Naive thymus-derived CD4-positive, alpha-beta T cell (primary cell): ENCODE measurements at regions of chr2 and their contacts with region 1.

Region 1: GRCh38 chr2:240566203-240567136 is 1.8 kb upstream of the RNPEPL1 start:
- DNase-seq: peak; percentile 86 to 96 (median 92)
- ATAC-seq: peak; percentile 79
- H3K4me3 ChIP-seq: peak overlapping the region; percentile 82
- H3K4me3 Mint-ChIP-seq: peak overlapping the region; percentile 88 to 98 (median 94)
- H3K27ac ChIP-seq: peak overlapping the region; percentile 85
- H3K27ac Mint-ChIP-seq: peak overlapping the region; percentile 90 to 99 (median 98)
- H3K4me1 ChIP-seq: peaks cover 80% of the 10 kb centered on the region in 2 donors
- H3K4me1 Mint-ChIP-seq: peaks cover 53 to 82% (median 75%) of the 10 kb centered on the region in 7 donors
- H3K27me3 ChIP-seq: no peaks in the 10 kb centered on the region
- H3K27me3 Mint-ChIP-seq: no peaks in the 10 kb centered on the region

Region 2: DNA sequence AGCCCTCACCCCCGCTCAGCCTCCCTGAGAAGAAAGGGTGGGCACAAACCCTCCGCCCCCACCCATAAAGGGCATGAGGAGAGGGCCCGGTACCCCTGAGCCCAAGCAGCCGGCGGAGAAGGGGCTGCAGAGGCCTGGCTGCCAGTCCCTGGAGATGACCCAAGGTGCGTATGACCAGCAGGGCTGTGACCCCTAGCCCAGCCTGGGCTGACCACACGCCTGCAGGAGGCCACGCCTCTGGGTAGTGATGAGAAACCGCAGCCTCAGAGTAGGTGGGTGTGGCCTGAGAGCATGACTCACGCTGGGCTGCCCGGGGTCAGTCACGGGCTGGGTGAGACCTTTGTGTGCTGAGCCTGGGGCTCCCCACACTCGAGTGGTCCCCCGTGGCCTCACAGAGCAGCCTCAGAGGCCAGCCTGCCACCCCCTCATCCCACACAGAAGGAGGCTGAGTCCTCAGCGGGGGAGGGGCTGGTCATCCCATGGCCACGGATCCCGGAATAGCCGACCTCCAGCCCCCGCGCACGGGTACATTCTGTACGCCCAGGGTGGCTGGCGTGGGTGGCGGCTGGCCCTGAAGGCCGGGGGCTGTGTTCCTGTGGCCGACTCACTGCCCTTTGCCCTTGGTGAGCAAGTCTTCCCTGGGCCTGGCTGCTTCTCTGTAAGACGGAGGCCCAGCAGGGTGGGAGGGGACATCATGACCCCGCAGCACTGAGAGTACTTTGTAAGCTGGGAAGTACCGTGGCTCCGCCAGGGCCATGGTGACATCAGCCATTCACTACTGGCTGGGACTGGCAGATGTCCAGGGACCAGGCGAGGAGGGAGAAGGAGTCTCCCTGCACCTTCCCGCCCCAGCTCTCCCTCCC is 315.3 kb before region 1 on chr2:
- CTCF ChIA-PET with region 1: no interaction called
- POLR2A ChIA-PET with region 1: no interaction called
- intact Hi-C with region 1: no loop called
- DNase-seq: peak in 2 of 9 donors; percentile 5 to 15
- ATAC-seq: peak; percentile 48
- H3K4me3 ChIP-seq: no peak overlapping the region
- H3K4me3 Mint-ChIP-seq: no peak overlapping the region
- H3K27ac ChIP-seq: no peak overlapping the region
- H3K27ac Mint-ChIP-seq: no peak overlapping the region
- H3K4me1 ChIP-seq: no peaks in the 10 kb centered on the region
- H3K4me1 Mint-ChIP-seq: no peaks in the 10 kb centered on the region
- H3K27me3 ChIP-seq: no peaks in the 10 kb centered on the region
- H3K27me3 Mint-ChIP-seq: peaks cover 0 to 25% (median 8%) of the 10 kb centered on the region in 5 donors

Region 3: GRCh38 chr2:240499309-240500301 is 66.9 kb before region 1 on chr2:
- CTCF ChIA-PET with region 1: no interaction called
- POLR2A ChIA-PET with region 1: no interaction called
- intact Hi-C with region 1: no loop called
- DNase-seq: peak in 1 of 9 donors; percentile 17
- ATAC-seq: no peak
- H3K4me3 ChIP-seq: no peak overlapping the region
- H3K4me3 Mint-ChIP-seq: no peak overlapping the region
- H3K27ac ChIP-seq: no peak overlapping the region
- H3K27ac Mint-ChIP-seq: no peak overlapping the region
- H3K4me1 ChIP-seq: no peaks in the 10 kb centered on the region
- H3K4me1 Mint-ChIP-seq: peaks cover 0 to 2% (median 0%) of the 10 kb centered on the region in 7 donors
- H3K27me3 ChIP-seq: no peaks in the 10 kb centered on the region
- H3K27me3 Mint-ChIP-seq: no peaks in the 10 kb centered on the region

Region 4: GRCh38 chr2:240513549-240514287 is 52.8 kb before region 1 on chr2:
- CTCF ChIA-PET with region 1: interaction called, 12 read pairs
- POLR2A ChIA-PET with region 1: interaction called, 6 read pairs
- intact Hi-C with region 1: loop called (anchors 1 to 2 kb)
- DNase-seq: peak; percentile 57 to 82 (median 76)
- ATAC-seq: peak; percentile 99
- H3K4me3 ChIP-seq: no peak overlapping the region
- H3K4me3 Mint-ChIP-seq: peak overlapping the region in 3 of 10 donors; percentile 12 to 28 (median 13)
- H3K27ac ChIP-seq: no peak overlapping the region
- H3K27ac Mint-ChIP-seq: peak overlapping the region; percentile 9 to 76 (median 42)
- H3K4me1 ChIP-seq: peaks cover 6% of the 10 kb centered on the region in 2 donors
- H3K4me1 Mint-ChIP-seq: peaks cover 6 to 16% (median 12%) of the 10 kb centered on the region in 7 donors
- H3K27me3 ChIP-seq: no peaks in the 10 kb centered on the region
- H3K27me3 Mint-ChIP-seq: no peaks in the 10 kb centered on the region

Region 5: GRCh38 chr2:240586198-240586918 is 19.9 kb after region 1 on chr2 and contains the start of gene CAPN10:
- CTCF ChIA-PET with region 1: interaction called, 61 read pairs
- POLR2A ChIA-PET with region 1: interaction called, 264 read pairs
- intact Hi-C with region 1: loop called (anchors 1 kb)
- DNase-seq: peak; percentile 93 to 98 (median 97)
- ATAC-seq: peak; percentile 92
- H3K4me3 ChIP-seq: peak within 1 kb of the TSS; percentile 89
- H3K4me3 Mint-ChIP-seq: peak within 1 kb of the TSS; percentile 82 to 97 (median 94)
- H3K27ac ChIP-seq: peak within 1 kb of the TSS; percentile 94
- H3K27ac Mint-ChIP-seq: peak within 1 kb of the TSS; percentile 90 to 97 (median 92)
- H3K4me1 ChIP-seq: peaks cover 30 to 33% of the 10 kb centered on the region in 2 donors
- H3K4me1 Mint-ChIP-seq: peaks cover 31 to 69% (median 56%) of the 10 kb centered on the region in 7 donors
- H3K27me3 ChIP-seq: no peaks in the 10 kb centered on the region
- H3K27me3 Mint-ChIP-seq: no peaks in the 10 kb centered on the region
- total RNA-seq, gene CAPN10: 54.1 to 74.8 (median 64.5) TPM

Region 6: GRCh38 chr2:240624950-240625621 is 58.6 kb after region 1 on chr2 and contains the start of gene GPR35:
- CTCF ChIA-PET with region 1: interaction called, 3 read pairs
- POLR2A ChIA-PET with region 1: interaction called, 30 read pairs
- intact Hi-C with region 1: loop called (anchors 1 kb)
- DNase-seq: peak; percentile 34 to 88 (median 56)
- ATAC-seq: peak; percentile 86
- H3K4me3 ChIP-seq: peak within 1 kb of the TSS; percentile 24
- H3K4me3 Mint-ChIP-seq: peak within 1 kb of the TSS; percentile 57 to 83 (median 71)
- H3K27ac ChIP-seq: peak within 1 kb of the TSS; percentile 69
- H3K27ac Mint-ChIP-seq: peak within 1 kb of the TSS; percentile 47 to 93 (median 90)
- H3K4me1 ChIP-seq: peaks cover 59 to 76% of the 10 kb centered on the region in 2 donors
- H3K4me1 Mint-ChIP-seq: peaks cover 18 to 68% (median 54%) of the 10 kb centered on the region in 7 donors
- H3K27me3 ChIP-seq: no peaks in the 10 kb centered on the region
- H3K27me3 Mint-ChIP-seq: no peaks in the 10 kb centered on the region
- total RNA-seq, gene GPR35: 7.1 to 19.0 (median 10.2) TPM

Region 7: DNA sequence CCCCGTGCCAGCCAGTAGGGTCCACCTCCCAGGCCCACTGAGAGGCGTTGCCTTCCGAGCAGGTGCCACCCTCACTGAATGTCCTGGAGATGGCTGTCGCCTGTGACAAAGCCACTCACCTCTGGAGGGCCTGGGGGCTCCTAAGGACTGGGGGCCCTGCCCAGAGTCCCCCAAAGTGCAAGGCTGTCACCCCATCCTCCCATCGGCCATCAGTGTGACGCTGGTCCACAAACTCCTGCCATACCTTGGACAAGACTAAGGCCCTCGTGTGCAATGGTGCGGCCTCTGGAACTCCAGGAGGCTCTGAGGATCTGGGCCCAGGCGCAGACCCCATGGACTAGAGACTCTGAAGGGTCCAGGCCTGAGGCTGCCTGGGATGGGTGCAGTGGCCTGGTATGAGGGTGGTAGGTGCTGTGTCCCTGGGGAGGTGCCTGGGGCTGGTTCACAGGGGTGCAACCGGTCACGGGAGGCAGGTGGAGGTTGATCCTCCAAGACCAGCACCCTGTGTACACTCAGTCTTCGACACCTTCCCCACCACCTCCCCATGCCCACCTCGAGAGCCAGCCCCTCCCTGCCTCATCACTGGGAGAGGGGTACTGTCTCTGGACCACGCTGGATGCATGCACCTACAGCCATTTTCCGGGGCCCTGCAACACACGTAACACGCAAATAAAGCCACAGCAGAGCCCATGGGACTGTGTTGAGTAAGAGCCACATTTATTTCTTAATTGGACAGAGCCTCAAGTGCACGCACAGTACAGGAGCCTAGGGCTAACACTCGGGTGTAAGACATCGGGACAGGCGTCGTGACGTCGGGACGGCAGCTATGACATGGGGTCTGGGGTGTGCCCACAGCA is 146.8 kb after region 1 on chr2:
- CTCF ChIA-PET with region 1: no interaction called
- POLR2A ChIA-PET with region 1: no interaction called
- intact Hi-C with region 1: no loop called
- DNase-seq: no peak
- ATAC-seq: no peak
- H3K4me3 ChIP-seq: no peak overlapping the region
- H3K4me3 Mint-ChIP-seq: peak overlapping the region in 1 of 10 donors; percentile 16
- H3K27ac ChIP-seq: no peak overlapping the region
- H3K27ac Mint-ChIP-seq: no peak overlapping the region
- H3K4me1 ChIP-seq: no peaks in the 10 kb centered on the region
- H3K4me1 Mint-ChIP-seq: no peaks in the 10 kb centered on the region
- H3K27me3 ChIP-seq: no peaks in the 10 kb centered on the region
- H3K27me3 Mint-ChIP-seq: peaks cover 0 to 10% (median 0%) of the 10 kb centered on the region in 5 donors

Region 8: DNA sequence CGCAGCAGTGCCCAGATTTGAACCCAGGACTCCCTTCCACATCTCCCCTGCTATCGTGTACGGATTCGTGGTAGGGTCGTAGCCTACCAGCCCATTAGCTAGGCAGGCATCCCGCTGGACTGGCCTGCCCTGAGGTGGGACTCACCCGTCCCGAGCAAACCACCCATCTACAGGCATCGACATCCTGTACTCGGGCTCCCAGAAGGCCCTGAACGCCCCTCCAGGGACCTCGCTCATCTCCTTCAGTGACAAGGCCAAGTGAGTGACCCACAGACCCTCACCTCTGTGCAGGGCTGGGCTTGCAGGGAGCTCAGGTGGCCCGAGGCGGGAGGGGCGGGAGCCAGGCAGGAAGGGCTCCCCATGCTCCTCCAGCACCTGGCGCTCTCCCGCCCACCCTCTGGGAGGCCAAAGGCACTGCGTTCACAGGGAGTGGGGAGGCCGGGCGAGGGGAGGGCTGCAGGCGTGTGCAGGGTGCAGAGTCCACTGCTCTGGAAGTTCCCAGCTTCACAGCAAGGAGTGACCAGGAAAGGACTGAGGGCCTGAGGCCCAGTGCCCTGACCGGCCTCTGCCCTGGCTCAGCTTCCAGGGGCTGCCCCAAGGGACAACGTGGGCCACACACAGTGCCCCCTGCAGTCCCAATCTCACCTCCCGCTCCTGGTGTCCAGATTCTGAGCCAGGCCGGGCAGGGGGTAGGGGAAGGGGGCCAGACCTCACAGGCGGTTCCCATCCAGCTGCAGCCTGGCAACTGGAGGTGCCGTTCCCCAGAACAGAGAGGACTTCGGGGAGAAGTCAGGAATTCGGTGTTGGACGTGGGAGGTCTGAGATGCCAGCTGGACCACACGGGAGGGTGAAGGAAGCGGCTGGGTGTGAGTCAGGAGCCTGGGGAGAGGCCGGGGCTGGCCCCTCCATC is 307.6 kb after region 1 on chr2:
- CTCF ChIA-PET with region 1: no interaction called
- POLR2A ChIA-PET with region 1: no interaction called
- intact Hi-C with region 1: no loop called
- DNase-seq: no peak
- ATAC-seq: no peak
- H3K4me3 ChIP-seq: no peak overlapping the region
- H3K4me3 Mint-ChIP-seq: no peak overlapping the region
- H3K27ac ChIP-seq: no peak overlapping the region
- H3K27ac Mint-ChIP-seq: no peak overlapping the region
- H3K4me1 ChIP-seq: no peaks in the 10 kb centered on the region
- H3K4me1 Mint-ChIP-seq: no peaks in the 10 kb centered on the region
- H3K27me3 ChIP-seq: no peaks in the 10 kb centered on the region
- H3K27me3 Mint-ChIP-seq: no peaks in the 10 kb centered on the region

Region 9: DNA sequence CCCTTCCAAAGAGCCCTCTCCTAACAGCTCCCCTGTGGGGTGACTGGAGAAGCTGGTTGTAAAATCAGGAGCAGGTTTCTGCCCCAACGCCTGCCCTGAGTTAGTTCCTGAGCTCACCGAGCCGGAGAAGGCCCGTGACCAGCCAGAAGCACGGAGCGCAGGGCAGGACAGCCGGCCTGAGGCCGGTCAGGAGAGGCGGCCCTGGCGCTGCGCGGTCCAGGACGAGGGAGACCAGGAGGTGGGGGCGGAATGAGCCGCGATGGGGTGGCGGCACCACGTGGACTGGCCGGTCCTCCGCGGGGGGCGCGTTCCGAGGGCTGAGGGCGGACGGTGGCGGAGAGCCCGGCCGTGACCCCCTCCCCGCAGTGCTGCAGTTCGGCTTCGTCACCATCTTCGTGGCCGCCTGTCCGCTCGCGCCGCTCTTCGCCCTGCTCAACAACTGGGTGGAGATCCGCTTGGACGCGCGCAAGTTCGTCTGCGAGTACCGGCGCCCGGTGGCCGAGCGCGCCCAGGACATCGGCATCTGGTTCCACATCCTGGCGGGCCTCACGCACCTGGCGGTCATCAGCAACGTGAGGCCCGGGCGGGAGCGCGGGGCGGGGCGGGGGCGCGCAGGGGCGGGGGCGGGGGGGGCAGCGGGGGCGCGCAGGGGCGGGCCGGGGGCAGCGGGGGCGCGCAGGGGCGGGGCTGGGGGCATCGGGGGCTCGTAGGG is 651.0 kb after region 1 on chr2:
- CTCF ChIA-PET with region 1: no interaction called
- POLR2A ChIA-PET with region 1: no interaction called
- intact Hi-C with region 1: loop called (anchors 5 kb)
- DNase-seq: peak in 7 of 9 donors; percentile 10 to 50 (median 36)
- ATAC-seq: peak; percentile 53
- H3K4me3 ChIP-seq: peak overlapping the region; percentile 44
- H3K4me3 Mint-ChIP-seq: peak overlapping the region; percentile 62 to 89 (median 79)
- H3K27ac ChIP-seq: peak overlapping the region; percentile 17
- H3K27ac Mint-ChIP-seq: peak overlapping the region in 6 of 9 donors; percentile 21 to 66 (median 33)
- H3K4me1 ChIP-seq: peaks cover 0 to 6% of the 10 kb centered on the region in 2 donors
- H3K4me1 Mint-ChIP-seq: peaks cover 9 to 15% (median 11%) of the 10 kb centered on the region in 7 donors
- H3K27me3 ChIP-seq: no peaks in the 10 kb centered on the region
- H3K27me3 Mint-ChIP-seq: peaks cover 0 to 21% (median 0%) of the 10 kb centered on the region in 5 donors